Panc1 (cell line): ENCODE measurements at regions of chr1 and their contacts with region 1.

Region 1: DNA sequence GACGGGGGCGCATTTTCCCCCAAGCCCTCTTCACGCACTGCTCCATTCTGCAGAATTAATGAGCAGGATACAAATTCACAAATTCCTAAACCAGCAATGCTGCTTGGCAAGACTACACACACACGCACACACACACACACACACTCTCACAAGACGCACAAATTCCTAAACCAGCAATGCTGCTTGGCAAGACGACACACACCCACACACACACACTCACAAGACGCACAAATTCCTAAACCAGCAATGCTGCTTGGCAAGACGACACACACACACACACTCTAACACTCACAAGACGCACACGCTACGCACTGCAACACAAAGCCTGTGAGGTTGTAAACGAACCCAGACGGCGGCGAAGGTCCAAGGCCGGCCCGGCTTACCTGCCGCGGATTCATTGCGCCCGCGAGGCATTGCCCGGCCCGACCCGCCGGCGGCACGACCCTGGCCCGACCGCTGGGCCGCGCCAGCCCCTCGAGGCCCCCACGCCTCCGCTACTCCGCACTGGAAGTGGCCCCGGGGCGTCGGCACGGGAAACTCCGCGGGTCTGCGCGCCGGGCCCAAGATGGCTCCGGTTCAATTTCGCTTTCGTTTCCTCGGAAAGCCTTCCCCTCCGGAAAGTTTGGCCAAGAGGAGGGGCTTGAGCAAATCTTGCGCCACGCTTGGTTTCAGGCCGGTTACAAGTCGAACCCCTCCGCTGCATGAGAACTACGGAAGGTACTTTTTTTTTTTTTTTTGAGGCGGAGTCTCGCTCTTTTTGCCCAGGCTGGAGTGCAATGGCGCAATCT is at the start of gene ADAR:
- DNase-seq: no peak
- ATAC-seq: peak; percentile 88
- H3K4me3 ChIP-seq: peak within 1 kb of the TSS; percentile 73 to 94
- H3K27ac ChIP-seq: peak within 1 kb of the TSS; percentile 96
- H3K4me1 ChIP-seq: peaks cover 40% of the 10 kb centered on the region
- H3K27me3 ChIP-seq: no peaks in the 10 kb centered on the region
- CTCF ChIP-seq: no peak; the same call in 1 of the 2 replicates
- total RNA-seq, gene ADAR: 136 TPM

Region 2: GRCh38 chr1:154419620-154420571 is 187.9 kb before region 1 on chr1:
- CTCF ChIA-PET with region 1: no interaction called
- POLR2A ChIA-PET with region 1: no interaction called
- in situ Hi-C with region 1: no loop called
- intact Hi-C with region 1: no loop called
- DNase-seq: peak; percentile 75
- ATAC-seq: peak; percentile 31; the same call in 1 of the 2 replicates
- H3K4me3 ChIP-seq: peak overlapping the region in 1 of 2 experiments; percentile 33; a peak in 2 of 4 replicates
- H3K27ac ChIP-seq: peak overlapping the region; percentile 89
- H3K4me1 ChIP-seq: peaks cover 66% of the 10 kb centered on the region
- H3K27me3 ChIP-seq: no peaks in the 10 kb centered on the region
- CTCF ChIP-seq: no peak

Region 3: DNA sequence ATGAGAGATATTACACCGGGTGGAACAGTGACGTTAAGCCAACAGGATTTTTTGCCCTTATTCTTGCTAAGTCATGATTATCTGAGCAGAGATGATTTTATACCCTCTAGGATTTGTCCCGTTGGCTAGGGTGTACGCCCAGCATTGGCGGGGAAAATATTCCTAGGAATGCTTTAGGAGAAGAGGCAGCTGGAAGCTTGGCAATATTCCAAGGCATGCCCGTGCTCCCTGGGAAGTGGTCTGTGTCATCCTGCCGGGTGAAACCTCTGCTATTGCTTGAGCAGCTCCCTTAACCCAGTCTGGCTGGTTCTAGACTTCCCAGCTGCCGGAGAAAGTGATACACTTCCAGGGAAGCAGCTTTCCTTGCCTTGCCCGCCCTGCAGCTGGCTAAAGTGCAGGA is 24.0 kb before region 1 on chr1:
- CTCF ChIA-PET with region 1: no interaction called
- POLR2A ChIA-PET with region 1: no interaction called
- in situ Hi-C with region 1: no loop called
- intact Hi-C with region 1: no loop called
- DNase-seq: no peak
- ATAC-seq: no peak
- H3K4me3 ChIP-seq: no peak overlapping the region
- H3K27ac ChIP-seq: no peak overlapping the region
- H3K4me1 ChIP-seq: no peaks in the 10 kb centered on the region
- H3K27me3 ChIP-seq: no peaks in the 10 kb centered on the region
- CTCF ChIP-seq: no peak

Region 4: GRCh38 chr1:154627257-154628120 is 19.7 kb after region 1 on chr1:
- CTCF ChIA-PET with region 1: no interaction called
- POLR2A ChIA-PET with region 1: interaction called, 10 read pairs
- in situ Hi-C with region 1: no loop called
- intact Hi-C with region 1: no loop called
- DNase-seq: peak; percentile 71
- ATAC-seq: peak; percentile 86
- H3K4me3 ChIP-seq: peak overlapping the region; percentile 81 to 88
- H3K27ac ChIP-seq: peak overlapping the region; percentile 99
- H3K4me1 ChIP-seq: peaks cover 12% of the 10 kb centered on the region; the same call in 1 of the 2 replicates
- H3K27me3 ChIP-seq: peaks cover 7% of the 10 kb centered on the region; the same call in 1 of the 2 replicates
- CTCF ChIP-seq: no peak

Region 5: DNA sequence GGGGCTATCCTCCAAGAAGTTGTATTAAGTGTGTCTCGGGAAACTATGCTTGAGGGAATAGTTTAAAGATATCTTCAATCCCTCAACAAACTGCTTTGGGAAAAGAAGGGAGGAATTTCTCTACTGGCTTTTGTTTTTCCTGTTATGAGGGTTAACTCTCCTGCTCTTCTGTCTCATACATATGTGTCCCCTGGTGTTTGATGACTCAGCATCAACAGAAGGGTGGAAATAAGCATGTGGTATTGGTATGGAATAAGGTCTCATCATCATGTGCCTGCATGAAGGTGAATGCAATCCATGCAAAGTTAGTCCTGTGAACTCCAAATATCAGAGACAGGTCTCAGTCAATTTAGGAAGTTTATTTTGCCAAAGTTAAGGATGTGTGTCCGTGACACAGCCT is 27.4 kb after region 1 on chr1:
- CTCF ChIA-PET with region 1: no interaction called
- POLR2A ChIA-PET with region 1: interaction called, 17 read pairs
- in situ Hi-C with region 1: no loop called
- intact Hi-C with region 1: no loop called
- DNase-seq: no peak
- ATAC-seq: no peak
- H3K4me3 ChIP-seq: no peak overlapping the region
- H3K27ac ChIP-seq: no peak overlapping the region
- H3K4me1 ChIP-seq: no peaks in the 10 kb centered on the region
- H3K27me3 ChIP-seq: peaks cover 17% of the 10 kb centered on the region
- CTCF ChIP-seq: no peak